ENCODE measurements at regions of chr4 and their contacts with region 1.

Region 1: GRCh38 chr4:76213415-76214176 is at the start of gene SCARB2:
- DNase-seq: peak; percentile 75 to 88
- ATAC-seq: peak; percentile 73 to 86 (median 81)
- H3K4me3 ChIP-seq: peak within 1 kb of the TSS; percentile 80
- H3K4me3 Mint-ChIP-seq: peak within 1 kb of the TSS; percentile 99
- H3K27ac ChIP-seq: peak within 1 kb of the TSS; percentile 86
- H3K27ac Mint-ChIP-seq: peak within 1 kb of the TSS; percentile 92 to 97
- H3K4me1 ChIP-seq: peaks cover 28% of the 10 kb centered on the region
- H3K4me1 Mint-ChIP-seq: peaks cover 42 to 48% of the 10 kb centered on the region in 2 donors
- H3K27me3 ChIP-seq: no peaks in the 10 kb centered on the region
- H3K27me3 Mint-ChIP-seq: peaks cover 3 to 6% of the 10 kb centered on the region in 2 donors
- CTCF ChIP-seq: no peak
- total RNA-seq, gene SCARB2: 22.0 to 39.0 (median 30.4) TPM

Region 2: GRCh38 chr4:76251441-76252270 is 38.1 kb after region 1 on chr4 and contains the start of gene FAM47E:
- intact Hi-C with region 1: loop called (anchors 5 kb)
- DNase-seq: peak; percentile 48 to 56
- ATAC-seq: peak; percentile 86 to 97 (median 96)
- H3K4me3 ChIP-seq: no peak within 1 kb of the TSS
- H3K4me3 Mint-ChIP-seq: peak within 1 kb of the TSS; percentile 79
- H3K27ac ChIP-seq: no peak within 1 kb of the TSS
- H3K27ac Mint-ChIP-seq: peak within 1 kb of the TSS; percentile 29 to 41
- H3K4me1 ChIP-seq: peaks cover 12% of the 10 kb centered on the region
- H3K4me1 Mint-ChIP-seq: peaks cover 8 to 13% of the 10 kb centered on the region in 2 donors
- H3K27me3 ChIP-seq: peaks cover 36% of the 10 kb centered on the region
- H3K27me3 Mint-ChIP-seq: peaks cover 60 to 86% of the 10 kb centered on the region in 2 donors
- CTCF ChIP-seq: peak; percentile 27
- total RNA-seq, gene FAM47E: 0.21 to 0.85 TPM in 2 of 3 donors, not detected in the other

Measured in natural killer cell (primary cell).